Panc1 (cell line): ENCODE measurements at regions of chr3 and their contacts with region 1.

Region 1: DNA sequence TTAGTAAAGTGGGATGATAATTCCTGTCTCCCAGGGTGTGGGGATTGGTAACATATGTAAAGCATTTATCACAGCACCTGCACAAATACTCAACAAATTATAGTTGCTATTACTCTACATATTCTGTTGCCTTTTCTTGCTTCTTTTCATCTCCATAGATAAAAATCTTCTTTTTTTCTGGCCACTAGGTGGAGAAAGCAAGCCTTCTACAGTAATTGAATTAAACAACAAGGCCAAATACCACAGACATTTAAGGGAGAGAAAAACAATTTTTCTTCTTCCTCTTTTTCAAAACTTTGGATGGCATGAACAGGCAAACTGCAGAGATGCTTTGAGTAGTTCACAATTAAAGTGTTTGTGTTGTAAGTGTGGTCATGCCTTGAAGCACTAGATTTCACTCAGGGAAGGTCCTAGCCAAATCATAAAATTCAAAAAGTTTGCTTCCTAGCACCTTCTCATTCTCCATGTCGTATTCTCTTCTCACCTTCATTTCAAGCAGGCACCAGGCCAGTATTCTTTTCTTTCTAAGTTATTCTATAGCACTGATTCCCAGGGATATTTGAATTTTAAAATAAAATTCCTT is 493.4 kb upstream of the TGFBR2 start:
- DNase-seq: peak; percentile 10
- ATAC-seq: no peak
- H3K4me3 ChIP-seq: no peak overlapping the region
- H3K27ac ChIP-seq: peak overlapping the region; percentile 29; the same call in 1 of the 2 replicates
- H3K4me1 ChIP-seq: no peaks in the 10 kb centered on the region; the same call in 1 of the 2 replicates
- H3K27me3 ChIP-seq: no peaks in the 10 kb centered on the region
- CTCF ChIP-seq: peak; percentile 59; the same call in 1 of the 2 replicates

Region 2: GRCh38 chr3:30199096-30199759 is 86.2 kb after region 1 on chr3:
- CTCF ChIA-PET with region 1: no interaction called
- POLR2A ChIA-PET with region 1: no interaction called
- in situ Hi-C with region 1: no loop called
- intact Hi-C with region 1: loop called (anchors 10 kb)
- DNase-seq: no peak
- ATAC-seq: no peak
- H3K4me3 ChIP-seq: no peak overlapping the region
- H3K27ac ChIP-seq: no peak overlapping the region
- H3K4me1 ChIP-seq: no peaks in the 10 kb centered on the region
- H3K27me3 ChIP-seq: no peaks in the 10 kb centered on the region
- CTCF ChIP-seq: peak; percentile 72; the same call in 1 of the 2 replicates

Region 3: DNA sequence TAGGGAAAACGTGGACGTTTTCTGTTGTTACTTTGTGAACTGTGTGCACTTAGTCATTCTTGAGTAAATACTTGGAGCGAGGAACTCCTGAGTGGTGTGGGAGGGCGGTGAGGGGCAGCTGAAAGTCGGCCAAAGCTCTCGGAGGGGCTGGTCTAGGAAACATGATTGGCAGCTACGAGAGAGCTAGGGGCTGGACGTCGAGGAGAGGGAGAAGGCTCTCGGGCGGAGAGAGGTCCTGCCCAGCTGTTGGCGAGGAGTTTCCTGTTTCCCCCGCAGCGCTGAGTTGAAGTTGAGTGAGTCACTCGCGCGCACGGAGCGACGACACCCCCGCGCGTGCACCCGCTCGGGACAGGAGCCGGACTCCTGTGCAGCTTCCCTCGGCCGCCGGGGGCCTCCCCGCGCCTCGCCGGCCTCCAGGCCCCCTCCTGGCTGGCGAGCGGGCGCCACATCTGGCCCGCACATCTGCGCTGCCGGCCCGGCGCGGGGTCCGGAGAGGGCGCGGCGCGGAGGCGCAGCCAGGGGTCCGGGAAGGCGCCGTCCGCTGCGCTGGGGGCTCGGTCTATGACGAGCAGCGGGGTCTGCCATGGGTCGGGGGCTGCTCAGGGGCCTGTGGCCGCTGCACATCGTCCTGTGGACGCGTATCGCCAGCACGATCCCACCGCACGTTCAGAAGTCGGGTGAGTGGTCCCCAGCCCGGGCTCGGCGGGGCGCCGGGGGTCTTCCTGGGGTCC is 493.5 kb after region 1 on chr3 and contains the start of gene TGFBR2:
- CTCF ChIA-PET with region 1: no interaction called
- POLR2A ChIA-PET with region 1: no interaction called
- in situ Hi-C with region 1: no loop called
- intact Hi-C with region 1: loop called (anchors 10 kb)
- DNase-seq: peak; percentile 86
- ATAC-seq: peak; percentile 96
- H3K4me3 ChIP-seq: peak within 1 kb of the TSS; percentile 78 to 96
- H3K27ac ChIP-seq: peak within 1 kb of the TSS; percentile 88
- H3K4me1 ChIP-seq: peaks cover 32% of the 10 kb centered on the region
- H3K27me3 ChIP-seq: no peaks in the 10 kb centered on the region
- CTCF ChIP-seq: peak; percentile 39; the same call in 1 of the 2 replicates
- total RNA-seq, gene TGFBR2: 45.9 TPM

Region 4: DNA sequence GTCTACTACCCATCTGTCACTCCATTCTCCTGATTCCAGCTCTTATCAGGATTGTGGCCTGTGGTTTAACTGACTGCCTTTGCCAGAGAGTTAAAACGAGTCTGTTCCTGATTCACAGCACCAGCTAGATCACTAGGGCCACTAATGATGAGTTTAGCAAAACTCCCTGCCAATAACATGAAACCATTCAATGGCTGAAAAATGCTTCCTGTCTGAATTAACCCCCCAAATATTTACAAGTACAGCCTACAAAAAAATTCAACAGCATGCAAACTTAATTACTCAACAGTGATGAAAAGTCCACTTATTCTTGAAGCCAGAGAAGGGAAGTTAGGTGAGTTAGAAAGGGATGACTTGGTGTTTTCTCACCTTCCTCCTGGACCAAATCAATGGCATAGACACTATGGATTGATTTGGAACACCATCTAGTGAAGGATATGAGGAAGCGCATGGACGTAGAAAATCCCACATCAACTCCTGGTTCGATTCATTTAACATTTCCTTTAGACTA is 634.8 kb after region 1 on chr3:
- CTCF ChIA-PET with region 1: no interaction called
- POLR2A ChIA-PET with region 1: no interaction called
- in situ Hi-C with region 1: no loop called
- intact Hi-C with region 1: loop called (anchors 10 kb)
- DNase-seq: no peak
- ATAC-seq: peak; percentile 83
- H3K4me3 ChIP-seq: no peak overlapping the region
- H3K27ac ChIP-seq: peak overlapping the region; percentile 68; the same call in 1 of the 2 replicates
- H3K4me1 ChIP-seq: peaks cover 9% of the 10 kb centered on the region
- H3K27me3 ChIP-seq: no peaks in the 10 kb centered on the region
- CTCF ChIP-seq: peak; percentile 67; the same call in 1 of the 2 replicates